Mammary epithelial cell (primary cell): ENCODE measurements at regions of chr6 and their contacts with region 1.

Region 1: GRCh38 chr6:70398783-70399728 is 14.3 kb upstream of the FAM135A start:
- DNase-seq: peak; percentile 98
- H3K4me3 ChIP-seq: peak overlapping the region; percentile 24 to 35 (median 34)
- H3K27ac ChIP-seq: peak overlapping the region; percentile 96
- H3K4me1 ChIP-seq: peaks cover 37% of the 10 kb centered on the region
- H3K27me3 ChIP-seq: no peaks in the 10 kb centered on the region
- CTCF ChIP-seq: no peak

Region 2: DNA sequence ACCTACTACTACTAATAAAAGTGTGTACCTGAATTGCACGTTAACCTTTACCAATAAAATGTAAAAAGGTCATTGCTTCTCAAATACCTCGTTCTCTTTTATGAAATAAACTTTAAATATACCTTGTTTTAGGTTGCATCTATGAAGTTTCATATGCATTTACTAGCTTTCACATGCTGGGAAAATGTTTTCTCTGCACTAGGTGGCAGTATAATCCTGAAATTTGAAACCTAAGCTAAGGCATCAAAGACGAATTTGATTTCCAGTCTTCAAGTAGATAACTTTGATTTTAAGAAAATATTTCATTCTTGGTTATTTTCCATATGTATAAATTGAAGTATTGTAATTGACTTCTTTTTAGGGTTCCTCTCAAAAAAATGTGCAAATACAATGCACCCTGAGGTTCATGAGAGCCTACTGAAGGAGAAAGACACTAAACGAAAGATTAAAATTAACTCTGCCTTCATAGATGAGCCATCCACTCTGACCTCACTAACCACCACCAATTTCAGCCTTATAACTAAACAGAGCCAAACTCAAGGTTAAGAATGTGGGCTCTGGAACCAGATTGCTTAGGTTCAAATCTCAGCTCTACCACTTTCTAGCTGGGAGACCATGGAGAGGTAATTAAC is 88.9 kb before region 1 on chr6:
- CTCF ChIA-PET with region 1: no interaction called
- dilution Hi-C with region 1: no loop called
- in situ Hi-C with region 1: no loop called
- intact Hi-C with region 1: no loop called
- DNase-seq: peak; percentile 48
- H3K4me3 ChIP-seq: no peak overlapping the region
- H3K27ac ChIP-seq: no peak overlapping the region
- H3K4me1 ChIP-seq: no peaks in the 10 kb centered on the region
- H3K27me3 ChIP-seq: peaks cover 59% of the 10 kb centered on the region
- CTCF ChIP-seq: peak; percentile 60 to 66

Region 3: GRCh38 chr6:70375882-70376281 is 23.2 kb before region 1 on chr6:
- CTCF ChIA-PET with region 1: interaction called, 3 read pairs
- dilution Hi-C with region 1: no loop called
- in situ Hi-C with region 1: no loop called
- intact Hi-C with region 1: loop called (anchors 2 kb)
- DNase-seq: no peak
- H3K4me3 ChIP-seq: no peak overlapping the region
- H3K27ac ChIP-seq: no peak overlapping the region
- H3K4me1 ChIP-seq: peaks cover 18% of the 10 kb centered on the region
- H3K27me3 ChIP-seq: no peaks in the 10 kb centered on the region
- CTCF ChIP-seq: peak; percentile 12 to 29

Region 4: DNA sequence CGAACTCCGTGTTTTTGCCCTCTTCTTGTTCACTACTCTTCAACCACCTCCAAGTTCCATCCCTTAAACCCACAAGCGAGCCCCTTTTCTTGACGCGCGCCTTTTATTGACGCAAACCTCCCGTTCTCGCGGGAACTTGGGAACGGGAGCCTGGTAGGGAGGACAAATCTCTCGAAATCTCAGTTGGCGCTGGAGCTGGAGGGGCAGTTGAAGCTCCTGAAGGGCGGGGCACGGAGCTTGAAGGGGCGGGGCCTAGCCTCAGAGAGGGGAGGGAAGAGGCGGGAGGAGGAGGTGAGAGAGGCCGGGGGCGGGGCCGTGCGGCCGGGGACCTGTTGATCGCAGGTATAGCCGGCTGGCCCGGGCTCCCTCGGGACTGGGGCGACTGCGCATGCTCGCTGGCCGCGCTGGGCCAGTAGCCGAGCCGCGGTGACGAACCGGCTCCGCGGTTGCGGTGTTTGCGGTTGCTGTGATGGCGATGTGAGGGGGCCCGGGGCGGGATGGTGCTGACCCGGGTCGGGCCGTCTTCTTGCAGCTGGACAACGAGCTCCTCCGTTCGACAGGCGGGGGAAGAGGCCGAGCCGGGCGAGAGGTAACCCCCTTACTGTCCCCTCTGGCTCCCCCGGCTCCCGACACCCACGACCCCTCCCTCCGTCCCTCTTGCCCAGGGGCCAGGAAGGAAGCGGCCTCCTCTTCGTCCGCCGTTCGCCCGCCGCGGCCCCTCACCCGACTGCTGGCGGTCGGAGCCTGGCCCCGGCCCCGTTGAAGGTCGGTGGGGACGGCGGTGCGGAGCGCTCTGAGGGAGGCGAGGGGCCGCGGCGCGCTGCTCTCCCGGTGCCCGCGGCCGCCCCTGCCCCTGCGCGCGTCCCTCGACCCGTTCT is 14.3 kb after region 1 on chr6 and contains the start of gene FAM135A:
- CTCF ChIA-PET with region 1: no interaction called
- dilution Hi-C with region 1: no loop called
- in situ Hi-C with region 1: no loop called
- intact Hi-C with region 1: loop called (anchors 1 kb)
- DNase-seq: peak; percentile 99
- H3K4me3 ChIP-seq: peak within 1 kb of the TSS; percentile 77 to 94 (median 79)
- H3K27ac ChIP-seq: peak within 1 kb of the TSS; percentile 83
- H3K4me1 ChIP-seq: peaks cover 7% of the 10 kb centered on the region
- H3K27me3 ChIP-seq: no peaks in the 10 kb centered on the region
- CTCF ChIP-seq: no peak
- total RNA-seq, gene FAM135A: 21.2 to 30.0 TPM

Region 5: DNA sequence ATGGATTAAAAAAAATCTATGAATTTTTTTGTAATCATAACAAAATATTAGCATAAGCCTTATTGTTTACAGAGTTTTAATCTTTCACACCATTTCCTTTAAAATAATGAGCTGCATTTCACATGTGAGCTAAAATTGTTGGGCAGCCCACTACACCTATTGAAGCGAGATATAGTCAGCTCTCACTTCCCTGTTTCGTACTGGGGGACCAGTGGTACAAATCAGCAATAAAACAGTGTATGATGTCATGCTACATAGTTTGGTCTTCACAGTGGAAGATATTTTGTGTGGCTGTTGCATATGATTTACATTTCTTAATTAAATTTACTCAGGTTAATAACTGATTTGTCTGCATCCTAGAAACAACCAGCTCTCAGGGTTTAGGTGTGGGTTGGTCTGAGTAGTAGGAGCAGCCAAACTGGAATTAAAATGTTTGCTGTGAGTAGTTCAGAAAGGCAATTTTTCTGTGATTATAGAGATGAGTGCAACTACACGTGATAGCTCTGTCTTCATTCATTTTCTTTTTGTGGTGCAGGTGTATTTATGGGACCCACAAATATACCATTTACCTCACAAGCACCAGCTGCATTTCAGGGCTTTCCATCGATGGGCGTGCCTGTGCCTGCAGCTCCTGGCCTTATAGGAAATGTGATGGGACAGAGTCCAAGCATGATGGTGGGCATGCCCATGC is 458.5 kb after region 1 on chr6:
- CTCF ChIA-PET with region 1: no interaction called
- dilution Hi-C with region 1: no loop called
- in situ Hi-C with region 1: no loop called
- intact Hi-C with region 1: no loop called
- DNase-seq: no peak
- H3K4me3 ChIP-seq: no peak overlapping the region
- H3K27ac ChIP-seq: no peak overlapping the region
- H3K4me1 ChIP-seq: no peaks in the 10 kb centered on the region
- H3K27me3 ChIP-seq: no peaks in the 10 kb centered on the region
- CTCF ChIP-seq: no peak